RWPE1 (cell line): ENCODE measurements at regions of chr5 and their contacts with region 1.

Region 1: GRCh38 chr5:141849375-141850243 is 28.6 kb downstream of the PCDH1 start:
- DNase-seq: peak; percentile 98
- H3K27ac ChIP-seq: peak overlapping the region; percentile 99
- CTCF ChIP-seq: no peak

Region 2: GRCh38 chr5:142446131-142446959 is 596.7 kb after region 1 on chr5:
- CTCF ChIA-PET with region 1: no interaction called
- POLR2A ChIA-PET with region 1: interaction called, 13 read pairs
- DNase-seq: peak; percentile 59
- H3K27ac ChIP-seq: no peak overlapping the region
- CTCF ChIP-seq: no peak